Posterior cingulate gyrus (tissue), 11 donors: ENCODE measurements at regions of chr3 and their contacts with region 1.

Region 1: DNA sequence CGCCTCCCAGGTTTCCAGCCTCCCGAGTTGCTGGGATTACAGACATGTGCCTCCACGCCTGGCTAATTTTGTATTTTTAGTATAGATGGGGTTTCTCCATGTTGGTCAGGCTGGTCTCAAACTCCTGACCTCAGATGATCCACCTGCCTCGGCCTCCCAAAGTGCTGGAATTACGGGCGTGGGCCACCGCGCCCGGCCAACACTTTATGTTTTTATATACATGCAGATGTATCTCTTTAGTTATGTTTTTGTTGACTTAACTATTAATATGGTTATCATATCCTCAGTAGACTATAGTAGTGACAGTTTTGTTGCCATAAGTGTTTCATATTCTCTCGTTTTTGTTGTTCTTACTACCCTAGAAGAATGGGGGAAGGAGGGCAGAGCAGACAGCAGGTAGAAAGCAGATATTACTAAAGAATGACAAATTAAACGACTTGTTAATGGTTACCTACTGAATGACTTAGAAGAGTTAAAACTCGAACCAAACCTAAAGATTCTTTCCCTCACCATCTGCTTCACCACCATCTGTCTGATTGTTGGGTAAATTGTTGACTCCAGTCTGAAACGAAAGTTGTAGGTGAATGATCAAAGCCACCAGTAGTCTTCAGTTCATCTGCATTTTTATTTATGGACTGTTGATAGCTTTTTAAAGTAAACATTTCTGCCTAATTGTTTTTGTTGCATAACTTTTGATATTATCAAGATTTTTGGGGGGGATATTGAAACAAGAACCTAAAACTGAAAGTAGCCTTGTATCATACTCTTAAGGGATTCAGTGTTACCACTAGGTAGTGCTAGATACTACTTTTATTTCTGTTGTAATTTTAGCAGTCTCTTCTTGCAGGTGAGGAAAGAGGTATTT is 89.3 kb downstream of the RASA2 start:
- DNase-seq: peak in 1 of 10 donors; percentile 39

Region 2: DNA sequence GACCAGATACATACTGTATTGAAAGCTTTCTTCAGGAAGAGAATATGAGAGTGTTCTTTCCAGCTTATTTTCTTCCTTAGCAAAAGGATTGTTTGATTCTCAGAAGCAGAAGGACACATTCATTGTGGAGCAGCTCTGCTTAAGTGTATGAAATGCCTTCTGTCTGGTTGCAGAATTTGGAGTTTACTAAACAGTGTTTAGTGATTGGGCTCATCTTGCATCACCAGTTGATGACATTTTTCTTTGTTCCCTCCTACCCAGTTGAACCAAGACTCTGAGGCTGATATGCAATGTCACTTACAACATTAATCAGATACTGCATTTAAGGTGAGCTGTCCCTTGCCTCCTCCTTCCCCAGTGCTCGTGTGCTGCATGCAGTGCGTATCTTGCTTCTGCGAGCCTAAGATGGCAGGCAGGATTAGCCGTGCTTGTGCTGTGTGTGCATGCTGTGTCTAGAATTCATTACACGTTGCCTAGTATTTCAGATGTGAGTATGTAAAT is 189.4 kb before region 1 on chr3:
- intact Hi-C with region 1: no loop called
- DNase-seq: peak; percentile 33 to 93 (median 56)

Region 3: GRCh38 chr3:141625506-141625905 is 49.4 kb after region 1 on chr3:
- intact Hi-C with region 1: no loop called
- DNase-seq: peak in 1 of 10 donors; percentile 66

Region 4: GRCh38 chr3:141875374-141875892 is 299.3 kb after region 1 on chr3:
- intact Hi-C with region 1: loop called (anchors 10 kb)
- DNase-seq: peak; percentile 71 to 97 (median 86)

Region 5: GRCh38 chr3:141998669-141999290 is 422.7 kb after region 1 on chr3:
- intact Hi-C with region 1: loop called (anchors 5 kb)
- DNase-seq: no peak